Vagina (tissue), 2 donors: ENCODE measurements at regions of chr17 and their contacts with region 1.

Region 1: GRCh38 chr17:64661976-64662773 is at the start of gene SMURF2:
- DNase-seq: peak in 1 of 2 donors; percentile 90
- H3K4me3 ChIP-seq: peak within 1 kb of the TSS; percentile 70 to 88
- H3K27ac ChIP-seq: peak within 1 kb of the TSS; percentile 88
- H3K4me1 ChIP-seq: peaks cover 29% of the 10 kb centered on the region
- H3K27me3 ChIP-seq: no peaks in the 10 kb centered on the region
- CTCF ChIP-seq: no peak
- POLR2A ChIP-seq: peak in 1 of 2 donors; percentile 95
- total RNA-seq, gene SMURF2: 19.9 TPM

Region 2: DNA sequence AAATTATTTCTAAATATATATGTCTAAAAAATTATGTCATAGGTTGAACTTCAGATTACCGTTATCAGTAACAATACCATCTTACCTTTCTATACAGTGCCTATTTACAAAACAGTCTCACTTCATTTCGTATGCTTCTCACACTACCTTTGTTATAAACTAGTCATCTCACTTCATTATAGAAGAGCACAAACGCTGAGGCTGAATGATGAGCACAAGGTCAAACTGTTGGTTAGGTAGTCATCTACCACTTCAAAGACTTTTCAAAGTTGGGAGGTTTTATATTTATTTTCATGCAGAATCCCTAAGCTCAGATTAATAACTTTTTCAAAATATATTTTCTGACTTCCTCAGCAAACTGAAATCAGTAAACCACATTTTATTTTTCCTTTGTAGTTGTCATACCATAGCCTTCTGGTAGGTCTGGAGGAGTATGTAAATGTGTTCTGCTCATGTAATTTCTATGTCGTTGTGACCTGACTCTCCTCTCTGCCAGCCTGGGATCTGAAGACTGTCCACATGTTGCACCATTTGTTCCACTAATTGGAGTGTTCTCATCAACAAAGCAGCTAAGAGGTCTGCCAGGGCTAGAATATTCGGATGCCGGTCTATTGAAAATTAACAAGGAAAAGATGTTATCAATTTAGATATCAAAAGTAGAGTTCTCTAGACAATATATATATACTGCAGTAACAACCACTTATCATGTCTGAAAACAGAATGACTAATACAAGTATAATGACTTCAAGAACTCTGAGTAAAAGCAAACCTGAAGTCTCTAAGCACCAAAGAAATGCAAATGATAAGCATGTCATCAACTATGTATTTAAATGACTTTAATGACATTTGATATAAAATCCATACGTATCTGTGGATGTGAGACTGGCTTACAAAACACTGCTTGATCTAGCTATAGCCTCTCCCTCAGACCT is 81.5 kb before region 1 on chr17:
- intact Hi-C with region 1: no loop called
- DNase-seq: no peak
- H3K4me3 ChIP-seq: no peak overlapping the region
- H3K27ac ChIP-seq: no peak overlapping the region
- H3K4me1 ChIP-seq: no peaks in the 10 kb centered on the region
- H3K27me3 ChIP-seq: no peaks in the 10 kb centered on the region
- CTCF ChIP-seq: no peak
- POLR2A ChIP-seq: no peak

Region 3: GRCh38 chr17:64741038-64741641 is 79.0 kb after region 1 on chr17:
- intact Hi-C with region 1: loop called (anchors 10 kb)
- DNase-seq: no peak
- H3K4me3 ChIP-seq: no peak overlapping the region
- H3K27ac ChIP-seq: peak overlapping the region; percentile 55
- H3K4me1 ChIP-seq: peaks cover 26% of the 10 kb centered on the region
- H3K27me3 ChIP-seq: no peaks in the 10 kb centered on the region
- CTCF ChIP-seq: no peak
- POLR2A ChIP-seq: no peak

Region 4: DNA sequence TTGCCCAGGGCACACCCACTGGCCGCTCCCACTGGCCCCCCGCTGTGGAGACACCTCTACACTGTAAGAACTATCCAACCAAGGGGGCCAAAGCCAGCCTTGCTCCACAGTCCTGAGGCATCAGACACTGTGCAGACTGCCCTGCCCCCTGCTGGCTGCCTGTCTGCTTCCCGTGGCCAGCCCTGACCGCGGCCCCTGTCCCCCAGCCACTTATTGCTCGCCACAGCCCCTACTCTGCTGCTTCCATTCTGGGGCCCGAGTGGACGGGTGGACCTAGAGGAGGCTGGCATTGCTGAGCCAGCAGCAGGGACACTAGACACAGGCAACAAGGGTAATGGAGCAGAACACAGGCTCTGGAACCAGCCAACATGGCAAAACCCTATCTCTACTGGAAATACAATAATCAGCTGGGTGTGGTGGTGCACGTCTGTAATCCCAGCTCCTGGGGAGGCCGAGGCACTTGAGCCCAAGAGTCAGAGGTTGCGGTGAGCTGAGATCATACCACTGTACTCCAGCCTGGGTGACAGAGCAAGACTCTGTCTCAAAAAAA is 276.8 kb after region 1 on chr17:
- intact Hi-C with region 1: no loop called
- DNase-seq: no peak
- H3K4me3 ChIP-seq: no peak overlapping the region
- H3K27ac ChIP-seq: no peak overlapping the region
- H3K4me1 ChIP-seq: no peaks in the 10 kb centered on the region
- H3K27me3 ChIP-seq: no peaks in the 10 kb centered on the region
- CTCF ChIP-seq: peak in 2 of 3 experiments; percentile 16 to 32
- POLR2A ChIP-seq: no peak